ENCODE measurements at regions of chr2 and their contacts with region 1.

Region 1: GRCh38 chr2:202911512-202912341 is at the starts of genes CARF and WDR12:
- DNase-seq: peak; percentile 94
- H3K4me3 Mint-ChIP-seq: peak within 1 kb of the TSS; percentile 98
- H3K27ac Mint-ChIP-seq: peak within 1 kb of the TSS; percentile 93
- H3K4me1 Mint-ChIP-seq: peaks cover 32% of the 10 kb centered on the region
- H3K27me3 Mint-ChIP-seq: no peaks in the 10 kb centered on the region
- total RNA-seq, gene CARF: 5.2 to 6.6 TPM
- total RNA-seq, gene WDR12: 86.1 to 97.8 TPM

Region 2: GRCh38 chr2:202265467-202266277 is 646.1 kb before region 1 on chr2 and contains the start of gene NOP58:
- CTCF ChIA-PET with region 1: no interaction called
- POLR2A ChIA-PET with region 1: no interaction called
- intact Hi-C with region 1: loop called (anchors 10 kb)
- DNase-seq: peak; percentile 96
- H3K4me3 Mint-ChIP-seq: peak within 1 kb of the TSS; percentile 49
- H3K27ac Mint-ChIP-seq: peak within 1 kb of the TSS; percentile 70
- H3K4me1 Mint-ChIP-seq: peaks cover 19% of the 10 kb centered on the region
- H3K27me3 Mint-ChIP-seq: no peaks in the 10 kb centered on the region
- total RNA-seq, gene NOP58: 151 to 155 TPM

Region 3: DNA sequence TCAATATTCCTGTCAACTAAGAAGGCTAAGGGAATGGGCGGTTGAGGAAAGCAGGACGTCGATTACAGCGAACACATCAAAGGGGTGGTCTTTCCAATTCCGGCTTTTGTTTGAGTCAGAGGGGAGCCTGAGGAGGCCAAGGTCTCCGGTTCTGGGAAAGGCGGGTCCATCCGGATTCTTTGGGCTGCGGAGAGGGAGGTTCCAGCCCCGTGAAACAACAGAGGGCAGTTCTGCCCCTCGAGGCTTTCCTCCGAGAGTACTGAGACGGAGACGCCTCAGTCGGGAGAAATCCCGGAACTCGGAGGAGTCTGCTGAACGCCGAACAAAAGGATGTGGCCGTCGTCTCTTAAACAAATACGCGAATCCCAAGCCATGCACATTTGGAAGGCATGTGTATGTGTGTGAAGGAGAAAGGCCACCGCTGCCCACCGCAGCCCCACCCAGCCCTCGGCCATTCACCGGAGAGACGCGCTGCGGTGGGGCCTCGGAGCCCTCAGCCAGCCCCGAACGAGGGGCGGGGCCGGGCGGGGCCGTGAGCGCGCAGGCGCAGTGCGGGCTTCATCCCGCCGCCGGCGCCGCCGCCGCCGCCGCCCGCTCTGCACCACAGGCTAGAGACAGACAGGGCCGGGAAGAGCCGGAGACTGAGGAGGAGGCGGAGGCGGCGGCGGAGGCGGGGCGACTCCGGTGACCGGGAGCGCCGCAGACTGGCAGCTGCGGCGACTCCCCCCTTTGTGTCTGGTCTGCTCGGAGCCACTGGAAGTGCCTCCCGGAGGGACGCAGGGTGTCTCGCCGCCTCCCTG is 535.9 kb before region 1 on chr2 and contains the start of gene BMPR2:
- CTCF ChIA-PET with region 1: no interaction called
- POLR2A ChIA-PET with region 1: no interaction called
- intact Hi-C with region 1: loop called (anchors 5 kb)
- DNase-seq: peak; percentile 88
- H3K4me3 Mint-ChIP-seq: peak within 1 kb of the TSS; percentile 98
- H3K27ac Mint-ChIP-seq: peak within 1 kb of the TSS; percentile 80
- H3K4me1 Mint-ChIP-seq: peaks cover 24% of the 10 kb centered on the region
- H3K27me3 Mint-ChIP-seq: no peaks in the 10 kb centered on the region
- total RNA-seq, gene BMPR2: 8.2 to 8.7 TPM

Region 4: DNA sequence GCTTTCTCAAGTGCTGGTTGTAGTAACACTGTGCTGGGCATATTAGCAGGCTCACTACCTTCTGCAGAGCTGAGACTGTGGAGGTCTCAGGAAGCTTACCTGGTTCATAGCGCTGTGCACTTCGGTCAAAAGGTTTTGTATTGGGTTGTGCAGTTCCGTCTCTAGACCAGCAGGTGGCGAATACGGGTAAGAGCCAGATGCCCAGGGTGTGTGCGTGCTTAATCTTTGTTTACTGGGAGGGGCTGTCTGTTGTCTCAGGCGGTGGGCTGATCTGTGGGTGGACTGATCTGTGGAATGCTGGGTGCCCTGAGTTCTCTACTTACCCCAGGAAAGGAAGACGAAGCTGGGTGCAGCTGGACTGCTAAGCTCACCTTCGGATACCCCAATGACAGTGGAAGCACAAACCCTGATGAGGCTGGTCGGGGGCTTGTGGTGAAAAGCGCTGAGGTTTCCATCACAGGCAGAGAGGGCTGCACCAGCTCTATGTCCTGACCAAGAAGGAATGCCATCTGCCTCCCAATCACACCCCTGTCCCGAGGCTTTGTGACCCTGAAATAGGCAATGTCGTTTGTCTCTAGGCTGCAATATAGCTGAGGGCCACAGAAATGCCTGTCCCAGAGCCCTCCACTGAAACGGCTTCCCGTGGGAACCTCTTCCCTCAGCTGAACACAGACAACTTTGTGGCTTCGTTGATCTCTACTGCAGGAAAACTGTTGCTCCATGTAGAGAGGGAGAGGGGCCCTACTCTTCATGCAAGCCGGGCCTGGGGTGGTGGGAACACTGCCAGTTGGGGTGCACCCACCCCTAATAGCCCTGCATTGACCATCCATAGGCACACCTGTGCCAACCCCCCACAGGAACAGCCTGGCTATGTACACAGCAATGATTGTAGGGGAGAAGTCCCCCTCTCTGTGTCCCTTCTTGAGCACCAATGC is 322.8 kb before region 1 on chr2:
- CTCF ChIA-PET with region 1: interaction called, 11 read pairs
- POLR2A ChIA-PET with region 1: no interaction called
- intact Hi-C with region 1: no loop called
- DNase-seq: peak; percentile 77
- H3K4me3 Mint-ChIP-seq: no peak overlapping the region
- H3K27ac Mint-ChIP-seq: no peak overlapping the region
- H3K4me1 Mint-ChIP-seq: peaks cover 7% of the 10 kb centered on the region
- H3K27me3 Mint-ChIP-seq: peaks cover 2% of the 10 kb centered on the region

Region 5: GRCh38 chr2:202870431-202871299 is 41.1 kb before region 1 on chr2:
- CTCF ChIA-PET with region 1: interaction called, 4 read pairs
- POLR2A ChIA-PET with region 1: interaction called, 5 read pairs
- intact Hi-C with region 1: loop called (anchors 2 kb)
- DNase-seq: peak; percentile 81
- H3K4me3 Mint-ChIP-seq: peak overlapping the region; percentile 88
- H3K27ac Mint-ChIP-seq: peak overlapping the region; percentile 61
- H3K4me1 Mint-ChIP-seq: peaks cover 7% of the 10 kb centered on the region
- H3K27me3 Mint-ChIP-seq: no peaks in the 10 kb centered on the region

Region 6: DNA sequence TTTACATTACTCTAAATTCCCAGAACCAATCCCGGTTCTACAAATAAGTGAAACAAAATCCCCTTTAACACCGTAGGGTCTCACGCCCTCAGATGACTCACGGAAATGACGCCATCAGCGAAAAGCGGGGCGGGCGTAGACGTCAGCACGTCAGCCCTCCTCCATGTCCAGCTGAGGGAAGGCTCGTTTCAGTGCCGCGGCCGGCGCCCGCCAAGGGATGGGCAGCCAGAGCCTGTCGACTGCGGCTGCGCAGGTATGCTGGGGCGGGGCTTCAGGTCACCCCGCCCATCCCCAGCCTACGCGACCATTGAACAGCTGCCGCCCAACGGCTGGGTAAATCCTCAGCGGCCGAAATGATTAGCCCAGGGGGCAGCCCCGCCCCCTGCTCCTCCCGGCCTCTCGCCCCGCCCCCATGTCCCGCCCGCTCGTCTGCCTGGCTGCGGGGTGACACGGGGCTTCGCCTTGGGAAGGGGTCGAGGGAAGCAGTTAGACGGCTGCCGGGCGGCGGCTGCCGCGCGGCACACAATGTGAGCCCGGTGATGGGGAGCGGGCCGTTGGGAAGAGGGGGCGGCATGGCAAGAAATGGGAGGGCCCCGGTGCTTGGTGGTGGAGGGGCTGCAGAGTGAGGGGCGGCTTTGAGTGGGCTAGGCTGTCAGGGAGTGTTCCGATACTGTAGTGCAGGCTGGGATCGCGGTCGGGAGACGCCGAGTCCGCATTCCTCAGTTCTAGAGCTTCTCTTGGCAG is 102.9 kb after region 1 on chr2 and contains the start of gene NBEAL1:
- CTCF ChIA-PET with region 1: no interaction called
- POLR2A ChIA-PET with region 1: interaction called, 5 read pairs
- intact Hi-C with region 1: loop called (anchors 1 kb)
- DNase-seq: peak; percentile 98
- H3K4me3 Mint-ChIP-seq: peak within 1 kb of the TSS; percentile 94
- H3K27ac Mint-ChIP-seq: peak within 1 kb of the TSS; percentile 90
- H3K4me1 Mint-ChIP-seq: peaks cover 31% of the 10 kb centered on the region
- H3K27me3 Mint-ChIP-seq: no peaks in the 10 kb centered on the region
- total RNA-seq, gene NBEAL1: 10.6 to 11.6 TPM

Region 7: GRCh38 chr2:203327901-203328759 is 416.4 kb after region 1 on chr2 and contains the start of gene ABI2:
- CTCF ChIA-PET with region 1: no interaction called
- POLR2A ChIA-PET with region 1: no interaction called
- intact Hi-C with region 1: loop called (anchors 5 kb)
- DNase-seq: peak; percentile 76
- H3K4me3 Mint-ChIP-seq: peak within 1 kb of the TSS; percentile 86
- H3K27ac Mint-ChIP-seq: peak within 1 kb of the TSS; percentile 79
- H3K4me1 Mint-ChIP-seq: peaks cover 33% of the 10 kb centered on the region
- H3K27me3 Mint-ChIP-seq: no peaks in the 10 kb centered on the region
- total RNA-seq, gene ABI2: 43.7 to 51.2 TPM